AG04449 (cell line): ENCODE measurements at regions of chr4 and their contacts with region 1.

Region 1: DNA sequence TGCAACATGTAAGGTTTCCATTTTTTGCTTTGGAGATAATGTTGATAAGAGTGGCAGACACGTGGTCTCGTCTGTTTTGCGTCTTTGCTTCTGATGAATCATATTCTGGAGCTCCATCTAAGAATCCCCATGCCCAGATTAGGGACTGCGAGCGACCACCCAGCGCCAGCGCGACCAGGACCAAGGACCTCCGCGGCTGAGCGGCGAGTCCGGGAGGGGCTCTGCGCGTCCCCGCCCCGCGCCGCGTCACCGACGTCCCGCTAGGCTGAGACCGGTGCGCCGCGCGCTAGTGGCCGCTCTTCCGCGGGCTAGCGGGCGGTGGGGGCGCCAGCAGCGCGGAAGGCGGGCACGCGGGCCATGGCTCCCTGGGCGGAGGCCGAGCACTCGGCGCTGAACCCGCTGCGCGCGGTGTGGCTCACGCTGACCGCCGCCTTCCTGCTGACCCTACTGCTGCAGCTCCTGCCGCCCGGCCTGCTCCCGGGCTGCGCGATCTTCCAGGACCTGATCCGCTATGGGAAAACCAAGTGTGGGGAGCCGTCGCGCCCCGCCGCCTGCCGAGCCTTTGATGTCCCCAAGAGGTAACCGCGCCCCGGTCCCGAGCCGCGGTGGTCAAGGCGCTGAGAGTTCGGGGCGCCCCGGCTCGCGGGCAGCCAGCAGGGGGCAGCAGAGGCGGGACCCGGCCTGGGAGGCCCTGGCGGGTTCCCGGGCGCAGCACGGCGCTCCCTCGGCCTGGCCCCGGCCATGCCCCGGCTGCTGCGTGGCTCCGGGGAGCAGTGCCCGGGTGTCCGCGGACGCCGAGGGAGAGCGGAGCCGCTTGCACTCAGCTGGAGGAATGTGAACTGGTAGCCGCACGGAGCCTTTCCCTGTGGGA is at the start of gene SRD5A3:
- DNase-seq: no peak
- H3K4me3 ChIP-seq: peak within 1 kb of the TSS; percentile 75
- CTCF ChIP-seq: peak; percentile 84

Region 2: GRCh38 chr4:54971474-54971950 is 374.7 kb before region 1 on chr4:
- CTCF ChIA-PET with region 1: interaction called, 47 read pairs
- POLR2A ChIA-PET with region 1: no interaction called
- DNase-seq: no peak
- H3K4me3 ChIP-seq: no peak overlapping the region
- CTCF ChIP-seq: peak; percentile 60

Region 3: GRCh38 chr4:55321707-55322264 is 24.4 kb before region 1 on chr4:
- CTCF ChIA-PET with region 1: interaction called, 25 read pairs
- POLR2A ChIA-PET with region 1: no interaction called
- DNase-seq: no peak
- H3K4me3 ChIP-seq: no peak overlapping the region
- CTCF ChIP-seq: peak; percentile 48

Region 4: DNA sequence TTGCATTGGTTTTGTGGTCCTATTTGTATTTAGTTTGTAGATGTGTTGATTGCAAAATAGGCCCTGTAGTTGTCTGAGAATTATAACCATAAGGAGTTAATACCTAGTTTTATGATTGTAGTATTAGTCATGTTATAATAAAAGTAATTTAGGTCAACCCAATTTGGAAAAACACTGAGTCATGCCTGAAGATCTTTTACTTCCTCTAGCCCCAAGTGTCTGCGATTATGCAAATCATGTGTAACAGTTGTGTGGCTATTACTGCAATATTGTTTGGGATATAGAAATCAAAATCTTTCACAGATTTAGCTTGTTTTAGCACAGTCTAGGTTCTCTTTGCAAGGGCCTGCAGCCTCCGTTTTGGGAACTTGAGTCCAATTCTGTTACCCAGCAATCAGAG is 12.5 kb after region 1 on chr4:
- CTCF ChIA-PET with region 1: interaction called, 35 read pairs
- POLR2A ChIA-PET with region 1: no interaction called
- DNase-seq: peak; percentile 65
- H3K4me3 ChIP-seq: no peak overlapping the region
- CTCF ChIP-seq: no peak

Region 5: GRCh38 chr4:55395529-55396307 is 49.5 kb after region 1 on chr4 and contains the start of gene TMEM165:
- CTCF ChIA-PET with region 1: interaction called, 40 read pairs
- POLR2A ChIA-PET with region 1: interaction called, 7 read pairs
- DNase-seq: no peak
- H3K4me3 ChIP-seq: peak within 1 kb of the TSS; percentile 82
- CTCF ChIP-seq: no peak

Region 6: GRCh38 chr4:55435141-55435841 is 89.1 kb after region 1 on chr4:
- CTCF ChIA-PET with region 1: interaction called, 17 read pairs
- POLR2A ChIA-PET with region 1: no interaction called
- DNase-seq: no peak
- H3K4me3 ChIP-seq: no peak overlapping the region
- CTCF ChIP-seq: peak; percentile 42

Region 7: DNA sequence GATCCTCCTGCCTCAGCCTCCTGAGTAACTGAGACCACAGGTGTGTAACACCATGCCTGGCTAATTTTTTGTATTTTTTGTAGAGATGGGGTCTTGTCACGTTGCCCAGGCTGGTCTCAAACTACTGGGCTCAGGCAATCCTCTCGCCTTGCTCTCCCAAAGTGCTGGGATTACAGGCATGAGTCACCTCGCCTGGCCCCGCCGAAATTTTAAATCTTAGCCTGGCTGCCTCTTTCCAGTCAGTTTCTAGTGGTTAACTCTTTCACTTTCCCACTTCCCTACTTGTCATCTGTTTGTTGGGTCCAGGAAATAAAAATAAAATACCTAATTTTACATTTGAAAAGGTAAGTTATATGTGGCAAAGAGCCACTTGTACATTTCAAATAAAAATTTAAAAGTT is 111.9 kb after region 1 on chr4:
- CTCF ChIA-PET with region 1: no interaction called
- POLR2A ChIA-PET with region 1: no interaction called
- DNase-seq: no peak
- H3K4me3 ChIP-seq: no peak overlapping the region
- CTCF ChIP-seq: no peak

Region 8: GRCh38 chr4:55546756-55547465 is 200.7 kb after region 1 on chr4 and contains the start of gene CLOCK:
- CTCF ChIA-PET with region 1: interaction called, 7 read pairs
- POLR2A ChIA-PET with region 1: interaction called, 10 read pairs
- DNase-seq: no peak
- H3K4me3 ChIP-seq: peak within 1 kb of the TSS; percentile 77
- CTCF ChIP-seq: peak; percentile 62